ENCODE measurements at regions of chr14 and their contacts with region 1.

Region 1: GRCh38 chr14:60349663-60350365 is 100.8 kb downstream of the PPM1A start:
- DNase-seq: peak; percentile 33
- H3K4me3 ChIP-seq: no peak overlapping the region
- H3K27ac ChIP-seq: no peak overlapping the region
- H3K27me3 ChIP-seq: no peaks in the 10 kb centered on the region
- CTCF ChIP-seq: peak; percentile 63

Region 2: DNA sequence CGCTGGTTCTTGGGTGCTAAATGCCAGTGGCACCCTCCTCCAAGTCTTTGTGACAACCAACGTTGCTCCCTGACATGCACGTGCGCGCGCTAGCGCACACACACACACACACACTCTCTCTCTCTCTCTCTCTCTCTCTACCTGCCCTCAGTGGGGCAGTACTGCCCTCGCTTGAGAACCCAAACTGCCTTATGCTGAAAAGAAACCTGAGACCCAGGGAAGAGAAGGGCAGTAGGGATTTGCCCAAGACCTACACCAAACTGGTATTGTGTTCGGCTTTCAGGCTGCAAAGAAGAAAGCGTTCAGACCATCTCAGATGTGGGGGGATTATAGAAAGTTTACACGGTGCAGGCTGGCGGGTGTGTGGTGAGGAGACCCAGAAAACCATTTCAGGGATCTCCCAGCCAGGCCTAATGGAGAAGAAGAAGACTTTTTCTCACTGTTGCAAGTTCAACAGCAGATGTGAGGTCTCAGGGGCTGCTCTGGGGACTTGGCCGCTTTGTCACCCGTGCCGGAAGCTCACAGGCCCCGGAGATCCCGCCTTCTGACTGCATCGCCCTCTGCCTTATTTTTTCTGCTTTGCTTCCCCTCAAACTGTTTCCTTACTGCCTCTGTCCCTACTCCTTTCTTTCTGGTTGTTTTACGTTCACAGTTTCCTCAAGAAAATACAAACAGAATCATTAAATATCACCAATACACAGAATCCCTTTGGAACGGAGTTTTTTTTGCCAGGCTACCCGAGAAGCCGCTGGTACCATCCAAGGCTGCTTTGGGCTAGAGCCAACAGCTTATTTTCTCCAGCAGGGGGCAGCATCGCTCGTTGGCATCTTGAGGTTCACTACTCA is 18.4 kb before region 1 on chr14:
- CTCF ChIA-PET with region 1: interaction called, 60 read pairs
- POLR2A ChIA-PET with region 1: no interaction called
- DNase-seq: no peak
- H3K4me3 ChIP-seq: peak overlapping the region; percentile 46
- H3K27ac ChIP-seq: no peak overlapping the region
- H3K27me3 ChIP-seq: peaks cover 18% of the 10 kb centered on the region
- CTCF ChIP-seq: peak; percentile 76

Region 3: GRCh38 chr14:60363275-60363674 is 13.5 kb after region 1 on chr14:
- CTCF ChIA-PET with region 1: interaction called, 22 read pairs
- POLR2A ChIA-PET with region 1: no interaction called
- DNase-seq: no peak
- H3K4me3 ChIP-seq: no peak overlapping the region
- H3K27ac ChIP-seq: no peak overlapping the region
- H3K27me3 ChIP-seq: no peaks in the 10 kb centered on the region
- CTCF ChIP-seq: no peak

Region 4: DNA sequence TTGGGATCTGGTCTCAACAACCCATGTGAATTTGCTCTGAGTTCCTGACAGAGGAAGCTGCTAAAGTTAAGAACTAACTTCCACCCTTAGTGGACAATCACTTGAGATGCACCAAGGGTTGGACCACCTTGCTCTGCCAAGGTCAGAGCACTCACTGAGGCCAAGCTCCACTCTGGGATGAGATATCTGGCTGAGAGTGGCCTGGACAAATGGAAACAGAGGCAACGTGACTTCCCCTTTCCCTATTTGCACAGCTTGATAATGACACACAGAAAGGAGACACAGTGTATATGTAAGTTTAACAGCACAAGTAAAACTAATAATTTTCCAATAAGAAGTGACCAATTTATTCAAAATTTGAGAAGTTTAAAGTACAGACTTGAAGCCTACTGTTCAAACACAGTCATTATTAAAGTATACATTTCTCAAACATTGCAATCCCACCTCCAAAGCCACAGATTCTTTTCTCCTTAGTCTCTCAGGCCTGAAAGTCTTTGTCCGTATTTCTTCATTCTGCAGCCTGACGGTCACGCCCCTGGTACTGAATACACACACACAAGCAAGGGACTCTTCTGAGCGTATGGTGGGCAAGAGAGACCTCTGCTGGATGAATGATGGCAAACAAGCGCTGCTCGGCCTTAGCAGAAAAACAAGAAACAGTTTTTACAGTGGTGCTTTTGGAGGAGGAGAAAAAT is 902.7 kb after region 1 on chr14:
- CTCF ChIA-PET with region 1: interaction called, 11 read pairs
- POLR2A ChIA-PET with region 1: no interaction called
- DNase-seq: peak; percentile 98
- H3K4me3 ChIP-seq: no peak overlapping the region
- H3K27ac ChIP-seq: peak overlapping the region; percentile 94
- H3K27me3 ChIP-seq: no peaks in the 10 kb centered on the region
- CTCF ChIP-seq: peak; percentile 96

Region 5: GRCh38 chr14:61280526-61281185 is 930.8 kb after region 1 on chr14:
- CTCF ChIA-PET with region 1: interaction called, 63 read pairs
- POLR2A ChIA-PET with region 1: no interaction called
- DNase-seq: no peak
- H3K4me3 ChIP-seq: peak overlapping the region; percentile 50
- H3K27ac ChIP-seq: no peak overlapping the region
- H3K27me3 ChIP-seq: peaks cover 14% of the 10 kb centered on the region
- CTCF ChIP-seq: peak; percentile 42

Measured in AG04450 (cell line).